ENCODE measurements at regions of chr2 and their contacts with region 1.

Region 1: DNA sequence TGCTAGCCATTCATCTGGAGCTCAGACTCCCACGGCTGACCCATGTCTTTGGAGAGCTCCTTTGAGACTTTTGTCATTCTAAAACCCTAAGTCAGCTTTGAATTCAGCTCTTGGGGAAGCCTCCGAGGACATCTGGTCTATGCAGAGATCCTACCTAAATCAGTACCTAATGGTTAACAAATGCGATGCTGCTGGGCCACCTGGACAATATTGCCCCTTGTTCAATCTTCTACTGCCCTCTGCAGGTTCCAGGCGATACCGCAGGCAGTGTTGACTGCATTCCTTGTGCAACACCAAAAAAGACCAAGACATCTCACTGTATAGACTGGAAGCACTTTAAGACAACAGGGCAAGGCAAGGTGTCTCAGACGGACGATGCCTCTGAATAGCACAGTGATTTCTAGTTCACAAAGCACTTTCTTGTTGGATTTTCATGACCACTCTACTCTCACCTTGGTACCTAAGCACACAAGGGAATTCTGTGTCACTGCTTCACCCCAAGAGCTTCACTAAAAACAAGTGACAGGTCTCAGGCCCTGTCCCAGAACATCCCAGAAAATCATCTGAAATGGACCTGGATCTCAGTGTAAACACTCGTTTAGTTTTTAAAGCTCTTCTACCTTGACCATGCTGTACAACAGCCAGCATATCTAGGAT is 80.9 kb downstream of the XDH start:
- DNase-seq: peak; percentile 94
- ATAC-seq: peak; percentile 62
- H3K4me3 ChIP-seq: no peak overlapping the region
- H3K27ac ChIP-seq: peak overlapping the region; percentile 95
- H3K4me1 ChIP-seq: peaks cover 44% of the 10 kb centered on the region
- H3K27me3 ChIP-seq: no peaks in the 10 kb centered on the region
- CTCF ChIP-seq: peak; percentile 97

Region 2: DNA sequence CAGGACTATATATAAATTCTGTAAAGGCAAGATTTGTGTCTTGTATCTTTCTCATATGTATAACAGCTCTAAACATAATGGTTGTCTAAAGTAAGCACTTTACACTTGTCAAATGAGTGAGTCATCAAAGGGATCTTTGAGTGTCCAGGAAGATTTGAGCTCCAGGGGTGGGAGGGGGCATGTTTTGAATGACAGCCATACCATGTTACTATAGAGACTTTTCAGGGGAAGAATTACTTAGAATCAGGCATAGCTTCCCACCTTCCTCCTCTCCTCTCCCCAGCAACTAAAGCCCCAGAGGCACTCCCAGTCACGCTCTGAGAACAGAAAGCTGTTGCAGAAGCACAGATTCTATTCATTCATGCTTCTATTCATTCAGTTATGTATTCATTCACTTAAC is 1346.5 kb before region 1 on chr2:
- CTCF ChIA-PET with region 1: no interaction called
- POLR2A ChIA-PET with region 1: no interaction called
- intact Hi-C with region 1: no loop called
- DNase-seq: no peak
- ATAC-seq: no peak
- H3K4me3 ChIP-seq: no peak overlapping the region
- H3K27ac ChIP-seq: no peak overlapping the region
- H3K4me1 ChIP-seq: no peaks in the 10 kb centered on the region
- H3K27me3 ChIP-seq: peaks cover 27% of the 10 kb centered on the region
- CTCF ChIP-seq: no peak

Region 3: DNA sequence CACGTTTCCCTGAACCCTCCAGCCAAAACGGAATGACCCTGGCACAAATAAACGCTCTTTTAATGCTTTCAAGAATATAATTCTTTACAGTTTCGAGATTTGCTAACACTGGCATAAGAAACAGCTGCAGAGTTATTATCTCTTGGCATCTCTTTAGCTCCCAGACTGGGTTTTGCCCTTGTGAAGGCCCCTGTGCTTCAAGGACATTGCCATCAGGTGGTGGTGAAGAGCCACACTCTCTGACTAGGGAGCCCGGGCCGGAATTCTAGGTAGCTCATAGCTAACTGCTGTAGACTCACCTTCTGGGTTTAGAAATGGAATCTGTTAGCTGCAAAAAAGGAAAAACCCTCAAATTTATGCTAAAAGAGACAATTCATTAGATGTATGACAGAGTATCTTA is 182.2 kb before region 1 on chr2:
- CTCF ChIA-PET with region 1: no interaction called
- POLR2A ChIA-PET with region 1: no interaction called
- intact Hi-C with region 1: loop called (anchors 1 kb)
- DNase-seq: peak; percentile 30
- ATAC-seq: peak; percentile 67
- H3K4me3 ChIP-seq: no peak overlapping the region
- H3K27ac ChIP-seq: no peak overlapping the region
- H3K4me1 ChIP-seq: no peaks in the 10 kb centered on the region
- H3K27me3 ChIP-seq: peaks cover 27% of the 10 kb centered on the region; the same call in 1 of the 2 replicates
- CTCF ChIP-seq: peak; percentile 53

Region 4: GRCh38 chr2:31233741-31234682 is 99.6 kb before region 1 on chr2 and contains the start of gene EHD3:
- CTCF ChIA-PET with region 1: interaction called, 5 read pairs
- POLR2A ChIA-PET with region 1: no interaction called
- intact Hi-C with region 1: loop called (anchors 1 kb)
- DNase-seq: peak; percentile 88
- ATAC-seq: peak; percentile 98
- H3K4me3 ChIP-seq: peak within 1 kb of the TSS; percentile 70
- H3K27ac ChIP-seq: no peak within 1 kb of the TSS
- H3K4me1 ChIP-seq: peaks cover 7% of the 10 kb centered on the region; the same call in 1 of the 2 replicates
- H3K27me3 ChIP-seq: no peaks in the 10 kb centered on the region
- CTCF ChIP-seq: peak; percentile 71
- total RNA-seq, gene EHD3: 3.2 and 4.4 TPM in 2 replicates

Region 5: DNA sequence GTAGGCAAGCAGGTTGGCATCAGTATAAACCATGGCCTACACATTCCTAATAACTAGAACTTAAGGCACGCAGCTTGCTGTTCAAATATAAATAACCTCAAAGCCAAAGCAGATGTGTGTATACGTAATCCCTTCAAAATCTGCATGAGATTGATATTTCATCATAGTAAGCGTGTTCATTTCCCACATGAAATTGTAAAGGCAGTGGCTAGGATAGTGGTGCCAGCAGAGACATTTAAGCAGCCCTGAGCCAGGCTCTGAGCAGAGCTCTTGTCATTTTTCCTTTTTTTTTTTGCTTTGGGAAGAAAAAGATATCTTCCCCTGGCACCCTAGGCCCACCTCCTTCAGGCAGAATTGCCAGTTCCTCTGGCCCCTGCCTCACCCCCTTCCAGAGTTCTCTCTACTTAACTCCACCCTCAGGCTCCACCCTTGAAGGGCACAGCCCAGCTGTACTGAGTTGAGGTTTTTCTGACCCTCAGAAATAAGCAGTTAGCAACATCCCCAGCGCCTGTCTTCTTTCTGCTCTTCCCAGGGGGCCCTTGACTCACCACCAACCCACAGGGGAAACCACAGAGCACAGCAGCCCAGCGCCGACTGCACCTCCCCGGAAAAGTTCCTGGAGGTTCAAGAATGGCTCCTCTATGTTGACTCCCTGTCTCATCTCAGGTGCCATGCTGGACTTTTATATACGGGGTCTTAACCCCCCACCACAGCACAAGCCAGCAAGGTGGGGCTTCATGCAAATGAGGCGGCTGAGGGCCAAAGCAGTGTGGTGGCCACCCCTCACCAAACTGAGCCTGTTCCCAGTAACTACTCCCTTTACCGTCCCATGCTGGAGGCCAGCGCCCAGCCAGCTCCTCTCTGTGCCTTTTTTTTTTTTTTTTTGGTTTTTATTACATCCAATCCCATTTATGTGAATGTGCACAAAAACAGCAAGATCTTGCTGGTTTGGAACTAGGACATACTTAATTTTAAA is 15.0 kb before region 1 on chr2:
- CTCF ChIA-PET with region 1: no interaction called
- POLR2A ChIA-PET with region 1: no interaction called
- intact Hi-C with region 1: no loop called
- DNase-seq: no peak
- ATAC-seq: no peak
- H3K4me3 ChIP-seq: no peak overlapping the region
- H3K27ac ChIP-seq: no peak overlapping the region
- H3K4me1 ChIP-seq: peaks cover 2% of the 10 kb centered on the region
- H3K27me3 ChIP-seq: no peaks in the 10 kb centered on the region
- CTCF ChIP-seq: no peak

Region 6: GRCh38 chr2:31384351-31384750 is 50.7 kb after region 1 on chr2:
- CTCF ChIA-PET with region 1: interaction called, 4 read pairs
- POLR2A ChIA-PET with region 1: no interaction called
- intact Hi-C with region 1: loop called (anchors 1 kb)
- DNase-seq: peak; percentile 89
- ATAC-seq: peak; percentile 94
- H3K4me3 ChIP-seq: peak overlapping the region; percentile 48
- H3K27ac ChIP-seq: peak overlapping the region; percentile 97
- H3K4me1 ChIP-seq: peaks cover 40% of the 10 kb centered on the region
- H3K27me3 ChIP-seq: no peaks in the 10 kb centered on the region
- CTCF ChIP-seq: no peak

Region 7: GRCh38 chr2:31523871-31524492 is 190.3 kb after region 1 on chr2:
- CTCF ChIA-PET with region 1: no interaction called
- POLR2A ChIA-PET with region 1: no interaction called
- intact Hi-C with region 1: loop called (anchors 5 kb)
- DNase-seq: peak; percentile 86
- ATAC-seq: peak; percentile 69
- H3K4me3 ChIP-seq: no peak overlapping the region
- H3K27ac ChIP-seq: no peak overlapping the region
- H3K4me1 ChIP-seq: no peaks in the 10 kb centered on the region
- H3K27me3 ChIP-seq: peaks cover 36% of the 10 kb centered on the region
- CTCF ChIP-seq: peak; percentile 89

Region 8: DNA sequence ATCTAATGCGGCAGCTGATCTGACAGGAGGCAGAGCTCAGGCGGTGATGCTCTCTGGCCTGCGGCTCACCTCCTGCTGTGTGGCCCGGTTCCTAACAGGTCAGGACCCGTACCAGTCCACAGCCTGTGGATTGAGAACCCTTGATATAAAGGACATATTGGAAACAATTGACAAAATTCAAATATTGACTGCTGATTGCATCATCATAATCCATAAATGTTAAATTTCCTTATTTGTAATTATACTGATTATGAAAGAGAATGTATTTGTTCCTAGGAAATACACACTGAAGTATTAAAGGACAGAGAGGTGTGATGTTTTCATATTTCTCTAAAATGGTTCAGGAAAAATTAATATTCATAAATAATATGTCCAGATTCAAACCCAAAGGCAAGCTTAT is 310.9 kb after region 1 on chr2:
- CTCF ChIA-PET with region 1: no interaction called
- POLR2A ChIA-PET with region 1: no interaction called
- intact Hi-C with region 1: no loop called
- DNase-seq: no peak
- ATAC-seq: no peak
- H3K4me3 ChIP-seq: no peak overlapping the region
- H3K27ac ChIP-seq: no peak overlapping the region
- H3K4me1 ChIP-seq: no peaks in the 10 kb centered on the region
- H3K27me3 ChIP-seq: peaks cover 60% of the 10 kb centered on the region
- CTCF ChIP-seq: no peak

Region 9: DNA sequence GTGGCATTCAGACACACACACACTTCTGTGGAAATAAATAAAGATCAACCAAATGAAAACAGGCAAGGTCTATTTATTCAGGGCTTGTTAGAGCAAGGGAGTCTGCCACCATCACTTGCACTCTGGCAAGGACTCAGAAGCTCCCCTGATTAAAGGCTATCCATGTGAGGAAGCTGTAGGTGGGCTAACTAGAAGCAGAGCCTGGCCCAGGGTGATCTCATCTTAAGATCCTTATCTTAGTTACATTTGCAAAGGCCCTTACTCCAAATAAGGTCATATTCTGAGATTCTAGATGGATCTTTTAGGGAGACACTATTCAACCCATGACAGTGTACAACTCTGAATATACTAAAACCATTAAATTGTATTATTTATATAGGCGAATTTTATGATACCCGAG is 437.1 kb after region 1 on chr2:
- CTCF ChIA-PET with region 1: no interaction called
- POLR2A ChIA-PET with region 1: no interaction called
- intact Hi-C with region 1: no loop called
- DNase-seq: no peak
- ATAC-seq: no peak
- H3K4me3 ChIP-seq: no peak overlapping the region
- H3K27ac ChIP-seq: no peak overlapping the region
- H3K4me1 ChIP-seq: no peaks in the 10 kb centered on the region
- H3K27me3 ChIP-seq: no peaks in the 10 kb centered on the region
- CTCF ChIP-seq: no peak